CD4-positive, alpha-beta memory T cell (primary cell): ENCODE measurements at regions of chr11 and their contacts with region 1.

Region 1: GRCh38 chr11:1628506-1629325 is 859 bp upstream of the KRTAP5-5 start:
- DNase-seq: peak; percentile 48 to 66 (median 51)
- H3K4me3 ChIP-seq: no peak overlapping the region
- H3K4me3 Mint-ChIP-seq: peak overlapping the region in 2 of 8 donors; percentile 26 to 44
- H3K27ac ChIP-seq: no peak overlapping the region
- H3K27ac Mint-ChIP-seq: peak overlapping the region in 2 of 7 donors; percentile 37 to 83
- H3K4me1 ChIP-seq: peaks cover 8% of the 10 kb centered on the region
- H3K4me1 Mint-ChIP-seq: peaks cover 0 to 9% (median 7%) of the 10 kb centered on the region in 4 donors
- H3K27me3 ChIP-seq: peaks cover 8% of the 10 kb centered on the region
- H3K27me3 Mint-ChIP-seq: peaks cover 19 to 26% of the 10 kb centered on the region in 2 donors

Region 2: DNA sequence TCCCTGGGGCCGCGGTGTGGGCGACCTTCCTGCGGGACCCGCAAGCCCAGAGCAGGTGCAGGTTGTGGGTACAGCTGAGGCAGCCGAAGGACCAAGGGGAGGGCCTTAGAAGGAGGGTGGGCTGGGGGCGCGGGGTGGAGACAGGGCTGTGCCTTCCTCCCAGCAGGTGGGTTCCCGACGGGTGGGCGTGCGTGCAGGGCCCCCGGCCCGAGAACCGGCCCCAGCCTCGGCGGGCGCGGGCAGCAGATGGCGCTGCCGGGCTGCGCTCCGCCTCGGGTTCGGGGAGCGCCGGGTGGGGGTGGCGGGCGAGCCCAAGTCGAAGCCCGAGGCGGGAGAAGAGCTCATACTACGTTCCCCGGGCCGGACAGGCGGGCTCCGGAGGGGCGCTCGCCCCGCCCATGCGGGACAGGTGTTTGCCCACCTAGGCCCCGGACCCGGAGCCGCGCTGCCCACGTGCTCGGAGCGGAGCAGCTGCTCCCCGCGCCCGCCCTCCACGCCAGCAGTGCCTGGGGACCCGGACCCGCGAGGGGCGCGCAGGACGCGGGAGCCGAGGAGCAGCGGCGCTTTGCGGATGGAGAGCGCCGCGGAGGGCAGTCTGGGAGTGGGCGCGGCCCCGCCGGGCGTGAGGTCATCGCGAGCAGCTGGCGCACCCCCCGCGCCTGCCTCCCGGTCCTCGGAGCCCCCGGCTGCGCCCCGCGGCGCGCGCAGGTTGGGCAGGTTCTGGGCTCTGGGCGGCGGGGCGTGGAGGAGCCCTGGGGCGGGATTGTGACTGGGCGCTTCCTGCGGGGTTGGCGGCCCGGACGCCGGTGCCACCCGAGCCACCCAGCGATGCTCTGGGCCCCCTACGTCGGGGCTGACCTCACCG is 81.9 kb before region 1 on chr11:
- CTCF ChIA-PET with region 1: interaction called, 12 read pairs
- POLR2A ChIA-PET with region 1: no interaction called
- intact Hi-C with region 1: loop called (anchors 1 kb)
- DNase-seq: peak in 4 of 5 donors; percentile 40 to 59 (median 52)
- H3K4me3 ChIP-seq: no peak overlapping the region
- H3K4me3 Mint-ChIP-seq: peak overlapping the region in 1 of 8 donors; percentile 31
- H3K27ac ChIP-seq: no peak overlapping the region
- H3K27ac Mint-ChIP-seq: no peak overlapping the region
- H3K4me1 ChIP-seq: peaks cover 16% of the 10 kb centered on the region
- H3K4me1 Mint-ChIP-seq: peaks cover 0 to 10% (median 4%) of the 10 kb centered on the region in 4 donors
- H3K27me3 ChIP-seq: peaks cover 12% of the 10 kb centered on the region
- H3K27me3 Mint-ChIP-seq: peaks cover 7 to 16% of the 10 kb centered on the region in 2 donors

Region 3: DNA sequence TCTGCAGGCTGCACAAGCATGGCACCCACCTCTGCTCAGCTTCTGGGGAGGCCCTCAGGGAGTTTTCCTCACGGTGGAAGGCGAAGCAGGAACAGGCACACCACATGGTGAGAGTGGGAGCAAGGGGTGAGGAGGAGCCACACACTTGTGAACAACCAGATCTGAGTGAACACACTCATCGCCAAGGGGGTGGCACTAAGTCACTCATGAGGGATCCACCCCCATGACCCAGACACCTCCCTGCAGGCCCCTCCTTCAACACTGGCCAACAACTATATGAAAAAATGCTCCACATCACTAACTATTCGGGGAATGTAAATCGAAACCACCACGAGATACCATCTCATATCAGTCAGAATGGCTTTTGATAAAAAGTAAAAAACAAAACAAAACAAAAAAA is 29.9 kb before region 1 on chr11:
- CTCF ChIA-PET with region 1: interaction called, 53 read pairs
- POLR2A ChIA-PET with region 1: no interaction called
- intact Hi-C with region 1: loop called (anchors 2 kb)
- DNase-seq: peak in 3 of 5 donors; percentile 9 to 56 (median 36)
- H3K4me3 ChIP-seq: no peak overlapping the region
- H3K4me3 Mint-ChIP-seq: peak overlapping the region in 4 of 8 donors; percentile 1 to 48 (median 15)
- H3K27ac ChIP-seq: no peak overlapping the region
- H3K27ac Mint-ChIP-seq: peak overlapping the region in 3 of 7 donors; percentile 8 to 65 (median 19)
- H3K4me1 ChIP-seq: no peaks in the 10 kb centered on the region
- H3K4me1 Mint-ChIP-seq: peaks cover 11 to 34% (median 13%) of the 10 kb centered on the region in 4 donors
- H3K27me3 ChIP-seq: no peaks in the 10 kb centered on the region
- H3K27me3 Mint-ChIP-seq: peaks cover 12 to 18% of the 10 kb centered on the region in 2 donors